ENCODE measurements at regions of chr2 and their contacts with region 1.

Region 1: DNA sequence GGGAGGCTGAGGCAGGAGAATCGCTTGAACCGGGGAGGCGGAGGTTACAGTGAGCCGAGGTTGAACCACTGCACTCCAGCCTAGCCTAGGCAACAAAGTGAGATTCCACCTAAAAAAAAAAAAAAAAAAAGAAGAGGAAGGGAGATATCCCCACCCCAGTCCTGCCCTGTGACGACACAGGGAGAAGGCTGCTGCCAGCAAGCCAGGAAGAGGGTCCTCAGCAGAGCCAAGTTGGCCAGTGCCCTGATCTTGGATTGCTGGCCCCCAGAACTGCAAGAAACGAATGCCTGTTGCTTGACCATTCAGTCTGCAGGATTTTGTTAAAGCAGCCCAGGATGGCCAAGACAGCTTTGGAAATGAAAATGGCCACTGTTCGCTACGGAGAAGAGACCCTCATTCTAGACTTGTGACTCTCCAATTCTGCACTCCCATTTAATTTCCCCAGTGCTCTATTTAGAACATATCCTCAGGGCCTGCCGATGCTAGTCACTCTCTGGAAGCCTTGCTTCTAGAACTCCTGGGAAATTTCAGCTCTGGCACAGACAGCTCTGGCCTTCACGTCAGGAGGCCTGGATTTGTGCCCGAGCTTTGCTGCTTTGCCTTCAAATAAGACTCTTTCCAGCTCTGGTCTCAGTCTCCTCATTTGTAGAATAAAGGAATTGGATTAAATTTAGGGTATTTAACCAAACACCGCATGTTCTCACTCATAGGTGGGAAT is 15.7 kb upstream of the AMMECR1L start:
- DNase-seq: peak; percentile 30
- ATAC-seq: no peak
- H3K4me3 ChIP-seq: no peak overlapping the region
- H3K27ac ChIP-seq: no peak overlapping the region
- H3K4me1 ChIP-seq: no peaks in the 10 kb centered on the region
- H3K27me3 ChIP-seq: peaks cover 6% of the 10 kb centered on the region; the same call in 1 of the 2 replicates
- CTCF ChIP-seq: no peak
- POLR2A ChIP-seq: no peak
- RAD21 ChIP-seq: no peak

Region 2: GRCh38 chr2:127874378-127875271 is 26.9 kb before region 1 on chr2:
- CTCF ChIA-PET with region 1: no interaction called
- POLR2A ChIA-PET with region 1: interaction called, 15 read pairs
- dilution Hi-C with region 1: no loop called
- in situ Hi-C with region 1: no loop called
- intact Hi-C with region 1: no loop called
- DNase-seq: no peak
- ATAC-seq: no peak
- H3K4me3 ChIP-seq: no peak overlapping the region
- H3K27ac ChIP-seq: no peak overlapping the region
- H3K4me1 ChIP-seq: peaks cover 8% of the 10 kb centered on the region
- H3K27me3 ChIP-seq: no peaks in the 10 kb centered on the region
- CTCF ChIP-seq: no peak
- POLR2A ChIP-seq: no peak
- RAD21 ChIP-seq: no peak